ENCODE measurements at regions of chr5 and their contacts with region 1.

Region 1: GRCh38 chr5:173615884-173616576 is 420 bp downstream of the BOD1 start:
- DNase-seq: peak; percentile 85
- ATAC-seq: peak; percentile 61
- H3K4me3 ChIP-seq: peak overlapping the region; percentile 95
- H3K27ac ChIP-seq: peak overlapping the region; percentile 79
- H3K4me1 ChIP-seq: peaks cover 11% of the 10 kb centered on the region
- H3K27me3 ChIP-seq: no peaks in the 10 kb centered on the region
- CTCF ChIP-seq: peak; percentile 75
- POLR2A ChIP-seq: peak; percentile 68; the same call in 1 of the 2 replicates
- RAD21 ChIP-seq: peak; percentile 59

Region 2: DNA sequence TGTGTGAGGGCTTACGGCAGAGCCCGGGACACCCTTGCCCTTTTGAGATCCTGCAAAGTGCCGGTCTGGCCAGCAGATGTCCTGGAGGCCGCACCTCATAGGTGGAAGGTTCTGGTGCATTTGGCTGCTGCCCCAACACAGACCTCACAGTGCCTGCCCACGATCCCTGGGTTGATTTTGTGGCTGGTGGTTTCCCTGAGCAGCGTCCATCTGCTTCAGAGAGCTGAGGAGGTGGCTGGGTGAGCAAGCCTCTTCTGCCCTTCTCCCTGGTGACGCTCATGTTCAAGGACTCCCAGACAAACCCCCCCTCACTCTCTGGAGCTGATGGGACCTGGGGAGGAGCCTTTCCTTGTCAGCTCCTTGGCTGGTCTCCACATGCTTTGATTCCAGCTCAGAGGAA is 452.8 kb before region 1 on chr5:
- CTCF ChIA-PET with region 1: no interaction called
- POLR2A ChIA-PET with region 1: no interaction called
- dilution Hi-C with region 1: no loop called
- in situ Hi-C with region 1: no loop called
- intact Hi-C with region 1: loop called (anchors 10 kb)
- DNase-seq: peak; percentile 55
- ATAC-seq: no peak
- H3K4me3 ChIP-seq: no peak overlapping the region
- H3K27ac ChIP-seq: no peak overlapping the region
- H3K4me1 ChIP-seq: peaks cover 2% of the 10 kb centered on the region; the same call in 1 of the 2 replicates
- H3K27me3 ChIP-seq: no peaks in the 10 kb centered on the region
- CTCF ChIP-seq: no peak
- POLR2A ChIP-seq: no peak
- RAD21 ChIP-seq: no peak

Region 3: GRCh38 chr5:173331956-173332479 is 284.0 kb before region 1 on chr5:
- CTCF ChIA-PET with region 1: interaction called, 3 read pairs
- POLR2A ChIA-PET with region 1: no interaction called
- dilution Hi-C with region 1: no loop called
- in situ Hi-C with region 1: no loop called
- intact Hi-C with region 1: loop called (anchors 2 kb)
- DNase-seq: peak; percentile 83
- ATAC-seq: peak; percentile 11
- H3K4me3 ChIP-seq: no peak overlapping the region
- H3K27ac ChIP-seq: no peak overlapping the region
- H3K4me1 ChIP-seq: peaks cover 9% of the 10 kb centered on the region
- H3K27me3 ChIP-seq: no peaks in the 10 kb centered on the region
- CTCF ChIP-seq: peak; percentile 86
- POLR2A ChIP-seq: no peak
- RAD21 ChIP-seq: peak; percentile 91

Region 4: GRCh38 chr5:173567574-173567973 is 48.5 kb before region 1 on chr5:
- CTCF ChIA-PET with region 1: no interaction called
- POLR2A ChIA-PET with region 1: no interaction called
- dilution Hi-C with region 1: no loop called
- in situ Hi-C with region 1: no loop called
- intact Hi-C with region 1: no loop called
- DNase-seq: peak; percentile 77
- ATAC-seq: peak; percentile 63
- H3K4me3 ChIP-seq: no peak overlapping the region
- H3K27ac ChIP-seq: no peak overlapping the region
- H3K4me1 ChIP-seq: no peaks in the 10 kb centered on the region; the same call in none of the 2 replicates
- H3K27me3 ChIP-seq: no peaks in the 10 kb centered on the region
- CTCF ChIP-seq: no peak
- POLR2A ChIP-seq: no peak
- RAD21 ChIP-seq: no peak

Region 5: DNA sequence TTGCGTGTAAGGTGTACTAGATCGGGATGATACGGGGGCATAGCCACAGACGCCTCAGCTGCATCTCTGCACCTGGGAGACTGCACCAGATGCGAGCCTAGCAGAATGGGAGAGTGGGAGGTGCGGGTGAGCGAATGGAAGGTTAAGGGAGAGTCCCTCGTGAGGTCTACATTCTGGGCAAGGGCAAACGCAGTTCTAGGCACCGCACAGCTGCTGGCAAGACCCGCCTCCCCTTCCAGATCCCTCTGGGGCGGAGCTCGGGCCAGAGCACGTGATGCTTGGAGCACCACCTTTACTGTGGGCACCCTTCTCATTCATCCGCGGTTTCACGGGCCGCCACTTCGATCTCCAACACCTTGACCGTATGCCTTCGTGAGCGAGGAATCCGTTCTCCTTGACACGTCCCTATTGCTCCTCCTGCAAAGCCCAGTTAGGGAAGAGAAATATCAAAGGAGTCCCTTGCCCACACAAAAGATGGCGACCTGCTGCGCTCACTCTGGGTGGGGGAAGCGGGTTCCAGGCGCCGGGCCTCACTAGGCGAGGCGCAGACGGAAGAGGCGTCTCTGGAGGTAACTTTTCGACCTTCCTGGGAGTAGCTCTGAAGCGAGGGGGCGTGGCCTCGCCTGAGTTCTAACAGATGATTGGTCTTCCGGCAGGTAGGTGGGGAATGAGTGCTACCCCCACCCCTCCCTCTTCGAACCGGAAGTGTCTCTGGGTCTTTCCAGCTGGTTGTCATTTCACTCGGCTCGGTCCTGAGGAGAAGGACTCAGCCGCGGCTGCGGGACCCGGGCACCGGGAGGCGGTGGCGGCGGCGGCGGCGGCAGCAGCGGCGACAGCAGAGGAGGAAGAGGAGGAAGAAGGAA is 271.8 kb after region 1 on chr5 and contains the start of gene CPEB4:
- CTCF ChIA-PET with region 1: no interaction called
- POLR2A ChIA-PET with region 1: interaction called, 3 read pairs
- dilution Hi-C with region 1: no loop called
- in situ Hi-C with region 1: no loop called
- intact Hi-C with region 1: loop called (anchors 2 kb)
- DNase-seq: peak; percentile 99
- ATAC-seq: peak; percentile 97
- H3K4me3 ChIP-seq: peak within 1 kb of the TSS; percentile 59
- H3K27ac ChIP-seq: peak within 1 kb of the TSS; percentile 96
- H3K4me1 ChIP-seq: no peaks in the 10 kb centered on the region; the same call in 1 of the 2 replicates
- H3K27me3 ChIP-seq: no peaks in the 10 kb centered on the region
- CTCF ChIP-seq: no peak
- POLR2A ChIP-seq: peak; percentile 98
- RAD21 ChIP-seq: peak; percentile 1; the same call in 1 of the 2 replicates
- total RNA-seq, gene CPEB4: 22.6 and 24.2 TPM in 2 replicates

Region 6: DNA sequence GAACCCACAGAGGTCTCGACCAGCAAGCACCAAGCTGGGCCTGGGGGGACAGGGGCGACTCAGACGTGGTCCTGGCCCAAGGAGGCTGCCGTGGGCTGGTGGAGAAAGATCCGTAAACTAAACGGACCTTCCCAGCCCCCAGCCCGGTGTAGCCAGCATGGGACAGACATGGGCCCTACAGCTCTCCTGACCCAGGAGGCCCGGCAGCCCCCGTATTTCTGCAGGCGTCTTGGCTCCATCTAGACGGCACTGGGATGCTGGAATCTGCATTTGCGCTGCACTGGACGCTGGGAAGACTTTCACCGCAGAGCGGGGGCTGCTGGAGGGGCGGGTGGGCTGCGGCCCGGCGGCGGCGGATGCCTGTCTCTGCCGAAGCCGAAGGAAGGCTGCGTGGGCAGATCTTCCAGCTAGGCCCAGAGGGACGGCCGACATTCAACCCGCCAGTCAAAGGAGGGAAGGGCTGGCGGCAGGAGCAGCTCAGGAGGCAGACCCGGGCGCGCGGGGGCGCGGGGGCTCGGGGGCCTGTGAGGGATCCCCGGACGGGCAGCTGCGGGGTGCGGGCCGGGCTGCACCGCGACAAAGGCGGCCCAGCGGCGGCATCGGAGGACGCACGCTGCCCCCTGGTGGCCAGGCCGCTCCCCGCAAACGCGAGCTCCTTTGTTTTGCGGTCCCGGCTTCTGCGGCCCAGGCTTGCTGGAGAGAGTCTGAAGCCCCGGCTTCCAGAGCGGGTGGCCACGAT is 695.7 kb after region 1 on chr5:
- CTCF ChIA-PET with region 1: interaction called, 8 read pairs
- POLR2A ChIA-PET with region 1: no interaction called
- dilution Hi-C with region 1: no loop called
- in situ Hi-C with region 1: loop called (anchors 5 kb)
- intact Hi-C with region 1: loop called (anchors 1 kb)
- DNase-seq: peak; percentile 34
- ATAC-seq: peak; percentile 97
- H3K4me3 ChIP-seq: peak overlapping the region; percentile 40
- H3K27ac ChIP-seq: no peak overlapping the region
- H3K4me1 ChIP-seq: peaks cover 2% of the 10 kb centered on the region; the same call in 1 of the 2 replicates
- H3K27me3 ChIP-seq: peaks cover 10% of the 10 kb centered on the region; the same call in 1 of the 2 replicates
- CTCF ChIP-seq: peak; percentile 73
- POLR2A ChIP-seq: no peak
- RAD21 ChIP-seq: peak; percentile 53